SK-N-SH (cell line): ENCODE measurements at regions of chr1 and their contacts with region 1.

Region 1: GRCh38 chr1:28877132-28877781 is 37.1 kb upstream of the EPB41 start:
- DNase-seq: peak; percentile 80
- H3K4me3 ChIP-seq: peak overlapping the region in 1 of 2 experiments; percentile 31; a peak in 1 of 4 replicates
- H3K27ac ChIP-seq: no peak overlapping the region
- H3K4me1 ChIP-seq: peaks cover 0 to 3% of the 10 kb centered on the region in 2 experiments; a peak in 1 of 4 replicates
- H3K27me3 ChIP-seq: no peaks in the 10 kb centered on the region
- CTCF ChIP-seq: peak; percentile 91
- EP300 ChIP-seq: no peak
- RAD21 ChIP-seq: peak; percentile 99

Region 2: GRCh38 chr1:28642847-28643635 is 234.2 kb before region 1 on chr1 and contains the start of gene TAF12:
- CTCF ChIA-PET with region 1: interaction called, 39 read pairs
- POLR2A ChIA-PET with region 1: interaction called, 12 read pairs
- DNase-seq: peak; percentile 93
- H3K4me3 ChIP-seq: peak within 1 kb of the TSS; percentile 68 to 73
- H3K27ac ChIP-seq: peak within 1 kb of the TSS; percentile 82 to 91
- H3K4me1 ChIP-seq: peaks cover 0 to 11% of the 10 kb centered on the region in 2 experiments; a peak in 2 of 4 replicates
- H3K27me3 ChIP-seq: no peaks in the 10 kb centered on the region
- CTCF ChIP-seq: peak; percentile 36
- EP300 ChIP-seq: peak in 1 of 2 experiments; percentile 14; a peak in 1 of 4 replicates
- RAD21 ChIP-seq: peak; percentile 61
- polyA plus RNA-seq, gene TAF12: 34.9 and 44.2 TPM in 2 replicates

Region 3: DNA sequence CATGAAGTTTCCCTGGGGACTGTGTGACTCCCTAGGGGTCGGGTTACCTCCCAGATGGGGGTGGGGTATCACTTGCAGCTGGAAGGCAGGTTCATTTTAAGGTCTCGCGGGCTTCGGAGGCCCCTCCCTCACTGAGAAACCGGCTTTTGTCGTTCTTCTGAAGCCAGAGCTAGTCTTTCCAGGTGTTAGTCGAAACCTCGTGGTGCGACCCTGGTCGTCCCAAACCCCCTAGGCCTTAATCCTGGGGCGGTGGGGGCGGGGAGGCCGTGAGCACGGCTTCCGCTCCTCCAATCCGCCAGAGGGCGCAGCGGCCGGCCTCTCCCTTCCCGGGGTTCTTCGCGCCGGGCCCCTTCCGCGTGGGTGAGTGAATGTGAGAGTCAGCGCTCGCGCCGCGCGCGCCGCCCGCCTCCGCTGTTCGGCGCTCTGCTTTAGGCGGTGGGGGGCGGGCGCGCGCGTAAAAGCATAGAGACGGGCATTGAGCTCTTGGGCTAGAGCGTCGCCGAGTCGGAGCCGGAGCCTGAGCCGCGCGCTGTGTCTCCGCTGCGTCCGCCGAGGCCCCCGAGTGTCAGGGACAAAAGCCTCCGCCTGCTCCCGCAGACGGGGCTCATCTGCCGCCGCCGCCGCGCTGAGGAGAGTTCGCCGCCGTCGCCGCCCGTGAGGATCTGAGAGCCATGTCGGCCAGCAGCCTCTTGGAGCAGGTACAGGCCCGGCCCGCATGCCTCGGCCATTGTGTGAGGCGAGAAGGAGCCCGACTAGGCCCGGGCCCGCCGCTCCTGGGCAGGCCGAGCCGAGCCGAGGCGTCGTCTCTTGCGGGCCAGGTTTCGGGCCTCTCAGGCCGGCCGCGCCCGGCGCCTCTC is 140.6 kb before region 1 on chr1 and contains the start of gene YTHDF2:
- CTCF ChIA-PET with region 1: interaction called, 10 read pairs
- POLR2A ChIA-PET with region 1: no interaction called
- DNase-seq: peak; percentile 95
- H3K4me3 ChIP-seq: peak within 1 kb of the TSS; percentile 77 to 97
- H3K27ac ChIP-seq: peak within 1 kb of the TSS; percentile 88
- H3K4me1 ChIP-seq: peaks cover 14 to 17% of the 10 kb centered on the region in 2 experiments; a peak in 3 of 4 replicates
- H3K27me3 ChIP-seq: no peaks in the 10 kb centered on the region
- CTCF ChIP-seq: peak; percentile 88
- EP300 ChIP-seq: peak; percentile 24 to 47; a peak in 2 of 4 replicates
- RAD21 ChIP-seq: peak; percentile 11; the same call in 1 of the 2 replicates
- polyA plus RNA-seq, gene YTHDF2: 45.2 and 54.8 TPM in 2 replicates

Region 4: GRCh38 chr1:28811766-28812668 is 65.2 kb before region 1 on chr1 and contains the start of gene OPRD1:
- CTCF ChIA-PET with region 1: interaction called, 894 read pairs
- POLR2A ChIA-PET with region 1: interaction called, 3 read pairs
- DNase-seq: peak; percentile 79
- H3K4me3 ChIP-seq: peak within 1 kb of the TSS in 1 of 2 experiments; percentile 34; a peak in 2 of 4 replicates
- H3K27ac ChIP-seq: peak within 1 kb of the TSS in 1 of 2 experiments; percentile 86; a peak in 2 of 4 replicates
- H3K4me1 ChIP-seq: peaks cover 0 to 46% of the 10 kb centered on the region in 2 experiments; a peak in 1 of 4 replicates
- H3K27me3 ChIP-seq: peaks cover 16% of the 10 kb centered on the region
- CTCF ChIP-seq: no peak
- EP300 ChIP-seq: no peak
- RAD21 ChIP-seq: no peak
- polyA plus RNA-seq, gene OPRD1: 0.07 and 0.24 TPM in 2 replicates

Region 5: GRCh38 chr1:28845786-28846543 is 31.3 kb before region 1 on chr1:
- CTCF ChIA-PET with region 1: interaction called, 21 read pairs
- POLR2A ChIA-PET with region 1: no interaction called
- DNase-seq: no peak
- H3K4me3 ChIP-seq: no peak overlapping the region
- H3K27ac ChIP-seq: no peak overlapping the region
- H3K4me1 ChIP-seq: no peaks in the 10 kb centered on the region; a peak in 1 of 4 replicates
- H3K27me3 ChIP-seq: no peaks in the 10 kb centered on the region
- CTCF ChIP-seq: peak; percentile 25
- EP300 ChIP-seq: no peak
- RAD21 ChIP-seq: peak; percentile 40

Region 6: DNA sequence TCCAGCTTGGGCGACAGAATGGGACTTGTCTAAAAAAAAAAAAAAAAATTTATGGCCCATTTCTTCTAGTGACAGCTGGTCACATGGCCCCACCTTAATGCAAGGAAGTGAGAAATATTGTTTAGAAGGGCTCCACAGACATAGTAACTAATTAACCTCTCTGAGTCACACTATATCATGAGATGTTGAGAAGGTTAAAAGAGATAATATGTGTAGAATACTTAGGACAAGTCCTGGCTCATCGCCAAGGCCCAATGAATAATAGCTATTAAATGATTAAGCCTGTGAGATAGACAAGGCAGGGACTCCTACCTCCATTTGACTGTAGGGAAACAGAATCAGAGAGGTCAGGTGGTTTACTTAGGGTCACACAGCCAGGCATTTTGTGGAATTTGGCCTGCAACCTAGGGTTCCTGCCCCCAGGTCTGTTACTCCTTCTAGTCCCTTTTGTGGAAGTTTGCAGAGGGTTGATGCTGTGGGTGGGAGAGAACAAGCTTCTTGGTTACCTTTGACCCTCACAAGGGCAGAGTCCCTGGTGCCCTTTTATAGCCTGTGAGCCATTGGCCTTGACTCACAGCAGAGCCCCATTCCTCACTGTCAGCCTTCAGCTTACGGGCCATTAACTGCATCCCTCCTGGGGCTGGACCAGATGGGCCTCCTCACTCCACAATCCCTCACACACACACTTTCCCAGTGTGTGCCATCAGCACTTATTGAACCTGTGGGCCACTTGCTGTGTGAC is 16.8 kb before region 1 on chr1:
- CTCF ChIA-PET with region 1: interaction called, 84 read pairs
- POLR2A ChIA-PET with region 1: no interaction called
- DNase-seq: no peak
- H3K4me3 ChIP-seq: no peak overlapping the region
- H3K27ac ChIP-seq: no peak overlapping the region
- H3K4me1 ChIP-seq: peaks cover 3 to 4% of the 10 kb centered on the region in 2 experiments; a peak in 1 of 4 replicates
- H3K27me3 ChIP-seq: no peaks in the 10 kb centered on the region
- CTCF ChIP-seq: no peak
- EP300 ChIP-seq: no peak
- RAD21 ChIP-seq: no peak

Region 7: GRCh38 chr1:28935293-28935692 is 58.0 kb after region 1 on chr1:
- CTCF ChIA-PET with region 1: no interaction called
- POLR2A ChIA-PET with region 1: no interaction called
- DNase-seq: no peak
- H3K4me3 ChIP-seq: no peak overlapping the region
- H3K27ac ChIP-seq: no peak overlapping the region
- H3K4me1 ChIP-seq: no peaks in the 10 kb centered on the region
- H3K27me3 ChIP-seq: no peaks in the 10 kb centered on the region
- CTCF ChIP-seq: no peak
- EP300 ChIP-seq: no peak
- RAD21 ChIP-seq: no peak

Region 8: DNA sequence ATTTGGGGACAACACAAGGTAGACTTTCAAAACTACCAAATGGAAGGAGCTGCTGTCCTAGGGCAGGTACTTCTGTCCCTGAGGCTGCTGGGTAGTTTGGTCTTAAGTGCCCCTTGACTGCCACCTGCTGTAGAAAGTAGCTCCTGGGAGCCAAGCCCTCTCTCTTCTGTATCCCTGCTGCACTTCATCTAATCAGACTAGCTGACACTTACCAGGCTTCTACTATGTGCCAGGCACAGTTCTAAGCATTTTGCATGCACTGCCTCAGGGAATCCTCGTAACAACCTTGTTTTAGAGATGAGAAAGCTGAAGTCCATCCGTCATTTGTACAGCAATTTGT is 320.3 kb after region 1 on chr1:
- CTCF ChIA-PET with region 1: interaction called, 95 read pairs
- POLR2A ChIA-PET with region 1: no interaction called
- DNase-seq: peak; percentile 61
- H3K4me3 ChIP-seq: no peak overlapping the region
- H3K27ac ChIP-seq: peak overlapping the region in 1 of 2 experiments; percentile 71; a peak in 2 of 4 replicates
- H3K4me1 ChIP-seq: peaks cover 16 to 18% of the 10 kb centered on the region in 2 experiments; a peak in 2 of 4 replicates
- H3K27me3 ChIP-seq: no peaks in the 10 kb centered on the region
- CTCF ChIP-seq: peak; percentile 57
- EP300 ChIP-seq: no peak
- RAD21 ChIP-seq: peak; percentile 58